ENCODE measurements at regions of chr5 and their contacts with region 1.

Region 1: DNA sequence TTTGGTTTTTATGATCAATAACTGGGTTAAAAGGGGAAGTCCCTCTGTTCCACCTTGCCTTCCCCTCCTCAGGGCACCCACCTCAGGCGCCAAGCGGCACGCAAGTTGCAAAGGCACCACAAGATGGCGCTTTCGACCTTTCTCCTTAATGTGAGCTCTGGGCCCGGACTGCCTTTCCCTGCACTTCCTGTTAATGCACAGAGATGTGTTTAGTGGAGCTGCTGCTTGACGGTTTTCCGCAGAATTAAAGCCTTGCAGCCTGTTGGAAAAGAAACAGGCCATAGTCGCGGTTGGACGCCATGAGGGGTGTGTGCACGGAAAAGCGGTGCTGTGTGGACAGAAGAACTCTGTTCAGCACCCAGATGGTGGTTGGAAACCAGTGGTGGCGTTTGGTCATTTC is 17.9 kb downstream of the CXCL14 start:
- DNase-seq: peak; percentile 58
- H3K4me3 Mint-ChIP-seq: no peak overlapping the region
- H3K27ac Mint-ChIP-seq: no peak overlapping the region
- H3K4me1 Mint-ChIP-seq: peaks cover 5% of the 10 kb centered on the region
- H3K27me3 Mint-ChIP-seq: peaks cover 22% of the 10 kb centered on the region

Region 2: GRCh38 chr5:135578685-135579341 is 18.0 kb after region 1 on chr5 and contains the start of gene CXCL14:
- intact Hi-C with region 1: no loop called
- DNase-seq: no peak
- H3K4me3 Mint-ChIP-seq: no peak within 1 kb of the TSS
- H3K27ac Mint-ChIP-seq: no peak within 1 kb of the TSS
- H3K4me1 Mint-ChIP-seq: no peaks in the 10 kb centered on the region
- H3K27me3 Mint-ChIP-seq: peaks cover 45% of the 10 kb centered on the region
- total RNA-seq, gene CXCL14: not detected in 2 replicates

Region 3: DNA sequence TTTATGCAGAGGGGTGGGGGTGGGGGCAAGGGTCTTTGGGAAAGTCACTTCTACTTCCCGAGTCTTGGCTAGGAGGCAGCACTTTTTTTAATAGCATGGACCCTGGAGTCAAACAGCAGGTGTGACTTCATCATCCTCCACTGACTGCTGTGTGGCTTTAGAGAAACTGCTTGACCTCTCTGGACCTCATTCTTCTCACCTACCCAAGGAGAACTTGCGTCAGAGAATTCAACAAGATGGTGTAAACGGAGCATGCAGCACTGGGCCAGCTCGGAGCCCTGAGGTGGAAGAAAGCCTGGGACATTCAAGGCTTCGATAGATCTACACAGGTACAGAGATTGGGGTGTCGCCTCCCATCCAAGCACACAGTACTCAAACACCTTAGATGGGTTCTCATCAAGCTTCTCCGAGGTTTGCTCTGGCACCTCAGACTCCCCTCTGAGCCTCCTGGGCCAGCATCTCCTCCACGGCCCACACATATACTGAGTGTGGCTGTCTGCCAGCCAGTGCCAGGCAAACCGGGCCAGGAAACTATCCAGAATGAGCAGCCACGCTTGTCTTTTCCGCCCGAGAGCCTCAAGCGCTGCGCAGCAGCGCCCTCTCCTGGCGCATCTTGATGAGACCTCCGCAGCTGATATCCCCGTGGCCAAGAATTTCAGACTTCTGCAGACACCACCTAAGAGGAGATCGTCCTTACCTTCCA is 269.0 kb after region 1 on chr5:
- intact Hi-C with region 1: loop called (anchors 2 kb)
- DNase-seq: peak; percentile 17
- H3K4me3 Mint-ChIP-seq: no peak overlapping the region
- H3K27ac Mint-ChIP-seq: no peak overlapping the region
- H3K4me1 Mint-ChIP-seq: no peaks in the 10 kb centered on the region
- H3K27me3 Mint-ChIP-seq: peaks cover 13% of the 10 kb centered on the region